Activated CD4-positive, alpha-beta T cell treated with anti-CD3 and anti-CD28 coated beads, Interleukin-2, amount 10 ng/mL, durations not matched to agents 24 days and 14 days (primary cell): ENCODE measurements at regions of chr20 and their contacts with region 1.

Region 1: GRCh38 chr20:48635433-48636310 is 192.1 kb downstream of the PREX1 start:
- DNase-seq: peak; percentile 91
- H3K4me3 Mint-ChIP-seq: no peak overlapping the region
- H3K27ac Mint-ChIP-seq: peak overlapping the region; percentile 79
- H3K4me1 Mint-ChIP-seq: peaks cover 5% of the 10 kb centered on the region
- H3K27me3 Mint-ChIP-seq: no peaks in the 10 kb centered on the region

Region 2: GRCh38 chr20:48657475-48658470 is 22.1 kb after region 1 on chr20:
- intact Hi-C with region 1: loop called (anchors 1 kb)
- DNase-seq: peak; percentile 89
- H3K4me3 Mint-ChIP-seq: no peak overlapping the region
- H3K27ac Mint-ChIP-seq: no peak overlapping the region
- H3K4me1 Mint-ChIP-seq: peaks cover 13% of the 10 kb centered on the region
- H3K27me3 Mint-ChIP-seq: no peaks in the 10 kb centered on the region

Region 3: DNA sequence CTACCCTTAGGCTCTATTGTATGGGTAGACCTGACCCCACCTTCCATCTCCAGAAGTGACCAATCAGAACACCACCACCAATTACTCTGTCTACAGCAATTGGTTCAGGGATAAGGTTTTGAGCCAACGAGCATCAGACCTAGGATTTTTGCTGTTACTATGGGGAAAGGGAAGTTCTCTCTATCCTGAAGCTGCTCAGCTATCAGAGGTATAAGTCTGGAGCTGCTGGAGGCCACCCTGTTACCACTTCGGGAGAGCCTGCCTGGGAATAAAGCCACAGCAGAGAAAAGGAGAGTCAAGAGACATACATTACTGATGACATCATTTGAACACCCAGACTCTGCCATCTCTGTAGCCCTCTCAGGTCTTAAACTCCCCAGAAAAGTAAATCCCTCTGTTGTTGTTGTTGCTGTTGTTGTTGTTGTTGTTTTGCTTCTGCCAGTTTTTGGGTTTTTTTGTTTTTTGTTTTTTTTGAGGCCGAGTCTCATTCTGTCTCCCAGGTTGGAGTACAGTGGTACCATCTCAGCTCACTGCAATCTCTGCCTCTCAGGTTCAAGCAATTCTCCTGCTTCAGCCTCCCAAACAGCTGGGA is 97.7 kb after region 1 on chr20:
- intact Hi-C with region 1: no loop called
- DNase-seq: no peak
- H3K4me3 Mint-ChIP-seq: no peak overlapping the region
- H3K27ac Mint-ChIP-seq: no peak overlapping the region
- H3K4me1 Mint-ChIP-seq: peaks cover 47% of the 10 kb centered on the region
- H3K27me3 Mint-ChIP-seq: no peaks in the 10 kb centered on the region